ENCODE measurements at regions of chr15 and their contacts with region 1.

Region 1: DNA sequence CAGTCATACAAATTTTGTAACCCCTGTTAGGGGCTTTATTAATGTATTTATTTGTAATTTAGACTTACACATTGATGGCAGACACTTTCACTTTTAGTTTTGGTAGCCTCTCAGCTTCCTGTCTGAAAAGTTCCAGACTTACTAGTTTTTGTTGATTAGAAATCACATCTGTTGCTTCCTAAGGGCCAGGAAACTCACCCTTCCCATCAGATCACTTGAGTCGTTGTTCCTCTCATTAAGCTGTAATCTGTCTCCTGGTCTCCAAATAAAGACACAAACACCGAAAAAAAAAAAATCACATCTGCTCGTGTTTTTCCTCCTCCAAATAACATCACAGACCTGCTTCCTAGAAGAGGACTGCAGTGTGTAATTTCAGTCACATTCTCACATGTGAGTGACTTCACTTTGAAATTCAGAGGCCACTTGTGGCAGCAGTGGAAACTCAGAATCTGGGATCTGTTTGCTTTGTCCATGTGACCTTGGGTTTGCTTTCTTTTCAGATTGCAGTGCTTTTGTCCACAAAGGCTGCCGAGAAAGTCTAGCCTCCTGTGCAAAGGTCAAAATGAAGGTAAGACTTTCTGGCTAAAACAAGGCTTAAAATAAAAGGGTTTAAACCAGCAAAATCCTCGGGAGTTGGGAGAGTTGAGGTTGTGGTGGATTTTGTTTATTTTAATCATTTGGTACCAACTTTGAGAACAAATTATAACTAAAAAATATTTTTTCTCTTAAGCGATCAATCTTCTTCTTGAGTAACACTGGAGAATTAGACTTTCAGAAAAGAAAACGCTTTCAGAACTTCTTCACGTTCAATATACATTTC is 87.0 kb downstream of the KLHL25 start:
- DNase-seq: peak in 1 of 2 donors; percentile 60
- ATAC-seq: peak in 7 of 8 donors; percentile 6 to 65 (median 54)
- H3K4me3 ChIP-seq: peak overlapping the region in 7 of 10 donors; percentile 1 to 35 (median 23)
- H3K27ac ChIP-seq: peak overlapping the region; percentile 81 to 91 (median 86)
- H3K4me1 ChIP-seq: peaks cover 38 to 76% (median 63%) of the 10 kb centered on the region in 9 donors
- H3K27me3 ChIP-seq: no peaks in the 10 kb centered on the region
- CTCF ChIP-seq: no peak

Region 2: GRCh38 chr15:85485956-85486567 is 221.7 kb before region 1 on chr15:
- intact Hi-C with region 1: loop called in 4 of 10 experiments (anchors 10 kb)
- DNase-seq: peak in 1 of 2 donors; percentile 67
- ATAC-seq: peak; percentile 54 to 83 (median 76)
- H3K4me3 ChIP-seq: no peak overlapping the region
- H3K27ac ChIP-seq: peak overlapping the region in 1 of 10 donors; percentile 0
- H3K4me1 ChIP-seq: peaks cover 0 to 76% (median 51%) of the 10 kb centered on the region in 9 donors
- H3K27me3 ChIP-seq: no peaks in the 10 kb centered on the region
- CTCF ChIP-seq: peak; percentile 63 to 91 (median 82)

Region 3: GRCh38 chr15:85494048-85494793 is 213.5 kb before region 1 on chr15:
- intact Hi-C with region 1: loop called in 4 of 10 experiments (anchors 10 kb)
- DNase-seq: no peak
- ATAC-seq: peak in 7 of 8 donors; percentile 68 to 92 (median 78)
- H3K4me3 ChIP-seq: no peak overlapping the region
- H3K27ac ChIP-seq: peak overlapping the region in 9 of 10 donors; percentile 13 to 66 (median 55)
- H3K4me1 ChIP-seq: peaks cover 10 to 91% (median 86%) of the 10 kb centered on the region in 9 donors
- H3K27me3 ChIP-seq: no peaks in the 10 kb centered on the region
- CTCF ChIP-seq: no peak

Region 4: GRCh38 chr15:85618956-85619491 is 88.7 kb before region 1 on chr15:
- intact Hi-C with region 1: loop called in 4 of 10 experiments (anchors 2 to 5 kb)
- DNase-seq: peak; percentile 59 to 86
- ATAC-seq: peak; percentile 65 to 84 (median 77)
- H3K4me3 ChIP-seq: peak overlapping the region; percentile 16 to 63 (median 53)
- H3K27ac ChIP-seq: peak overlapping the region; percentile 63 to 93 (median 83)
- H3K4me1 ChIP-seq: peaks cover 20 to 100% (median 98%) of the 10 kb centered on the region in 9 donors
- H3K27me3 ChIP-seq: no peaks in the 10 kb centered on the region
- CTCF ChIP-seq: no peak